Activated CD8-positive, alpha-beta T cell treated with anti-CD3 and anti-CD28 coated beads, Interleukin-2, amount 10 ng/mL, durations not matched to agents 7 days and 5 days (primary cell): ENCODE measurements at regions of chr6 and their contacts with region 1.

Region 1: GRCh38 chr6:151690768-151691562 is 116.5 kb upstream of the ESR1 start:
- DNase-seq: peak; percentile 49
- ATAC-seq: peak; percentile 91
- H3K4me3 Mint-ChIP-seq: peak overlapping the region; percentile 69
- H3K27ac Mint-ChIP-seq: peak overlapping the region; percentile 75
- H3K4me1 Mint-ChIP-seq: peaks cover 18% of the 10 kb centered on the region
- H3K27me3 Mint-ChIP-seq: peaks cover 4% of the 10 kb centered on the region

Region 2: DNA sequence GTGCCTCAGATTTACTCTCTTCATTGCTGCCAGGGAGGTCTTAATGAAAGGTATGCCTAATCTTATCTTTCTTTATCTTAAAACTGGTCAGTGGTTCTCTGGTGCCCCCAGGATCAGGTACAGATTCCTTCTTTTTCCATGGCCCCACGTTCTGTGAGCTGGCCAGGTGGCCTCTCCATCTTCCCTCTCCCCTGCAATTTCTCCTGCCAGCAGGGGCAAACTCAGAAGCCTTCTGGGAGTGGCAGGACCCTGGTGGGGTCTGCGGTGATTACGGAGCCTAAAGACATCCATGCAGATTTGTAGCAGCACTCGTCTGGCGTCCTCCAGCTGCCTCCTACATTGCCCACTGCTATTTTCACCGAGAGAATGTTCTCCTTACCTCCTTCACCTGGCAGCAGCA is 101.3 kb before region 1 on chr6:
- CTCF ChIA-PET with region 1: no interaction called
- POLR2A ChIA-PET with region 1: no interaction called
- DNase-seq: no peak
- ATAC-seq: no peak
- H3K4me3 Mint-ChIP-seq: no peak overlapping the region
- H3K27ac Mint-ChIP-seq: no peak overlapping the region
- H3K4me1 Mint-ChIP-seq: no peaks in the 10 kb centered on the region
- H3K27me3 Mint-ChIP-seq: no peaks in the 10 kb centered on the region

Region 3: DNA sequence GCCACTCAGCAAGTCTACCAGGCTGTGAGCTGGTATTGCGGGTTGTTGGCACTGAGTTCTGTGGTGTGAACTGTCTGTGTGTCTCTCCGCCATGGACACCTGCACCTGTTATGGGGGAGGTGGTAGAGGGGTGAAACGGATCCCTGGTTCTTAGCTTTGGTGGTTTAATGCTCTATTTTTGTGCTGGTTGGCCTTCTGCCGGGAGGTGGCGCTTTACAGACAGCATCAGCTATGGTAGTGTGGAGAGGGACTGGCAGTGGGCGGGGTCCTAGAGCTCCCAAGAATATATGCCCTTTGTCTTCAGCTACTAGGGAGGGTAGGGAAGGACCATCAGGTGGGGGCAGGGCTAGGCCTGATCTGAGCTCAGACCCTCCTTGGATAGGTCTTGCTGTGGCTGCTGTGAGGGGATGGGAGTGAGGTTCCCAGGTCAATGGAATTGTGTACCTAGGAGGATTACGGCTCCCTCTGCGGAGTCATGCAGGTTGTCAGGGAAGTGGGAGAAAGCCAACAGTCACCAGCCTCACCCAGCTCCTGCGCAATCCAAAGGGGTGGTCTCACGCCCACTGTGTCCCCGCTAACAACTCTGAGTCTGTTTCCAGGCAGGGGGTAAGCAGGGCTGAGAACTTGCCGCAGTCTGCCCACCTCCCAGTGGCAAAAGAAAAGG is 42.9 kb before region 1 on chr6:
- CTCF ChIA-PET with region 1: no interaction called
- POLR2A ChIA-PET with region 1: no interaction called
- DNase-seq: no peak
- ATAC-seq: no peak
- H3K4me3 Mint-ChIP-seq: no peak overlapping the region
- H3K27ac Mint-ChIP-seq: no peak overlapping the region
- H3K4me1 Mint-ChIP-seq: peaks cover 9% of the 10 kb centered on the region
- H3K27me3 Mint-ChIP-seq: peaks cover 14% of the 10 kb centered on the region

Region 4: DNA sequence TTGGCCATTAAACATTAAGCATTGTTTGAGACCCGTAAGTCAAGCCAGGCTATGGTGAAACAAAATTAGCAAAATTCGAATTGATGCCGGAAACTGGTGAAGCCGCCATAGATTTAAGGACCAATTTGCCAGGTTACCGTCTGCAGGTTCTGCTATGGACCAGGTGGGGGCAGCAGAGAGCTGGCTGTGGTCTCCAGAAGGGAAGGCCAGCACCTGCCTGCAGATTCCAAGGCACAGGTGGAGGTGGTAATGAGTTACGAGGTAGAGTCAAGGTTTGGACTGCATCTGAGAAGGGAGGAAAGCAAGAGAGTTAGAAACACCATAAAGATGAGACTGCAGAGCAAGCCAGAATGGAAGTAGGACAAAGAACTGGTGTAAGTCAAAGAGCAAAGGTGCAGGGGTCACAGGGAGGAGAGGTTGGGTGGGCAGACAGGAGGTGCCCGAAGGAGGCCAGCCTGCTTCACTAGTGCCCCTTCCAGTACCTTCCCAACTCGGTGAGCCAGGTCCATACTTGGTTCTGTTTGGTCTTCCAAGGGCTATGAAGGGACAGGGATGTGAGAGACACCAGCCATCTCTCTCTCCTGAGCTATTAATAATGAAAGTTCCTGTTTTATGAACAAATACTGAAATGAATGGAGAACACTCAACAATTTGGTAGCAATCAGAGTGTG is 15.1 kb before region 1 on chr6:
- CTCF ChIA-PET with region 1: interaction called, 15 read pairs
- POLR2A ChIA-PET with region 1: interaction called, 5 read pairs
- DNase-seq: peak; percentile 62
- ATAC-seq: peak; percentile 82
- H3K4me3 Mint-ChIP-seq: no peak overlapping the region
- H3K27ac Mint-ChIP-seq: no peak overlapping the region
- H3K4me1 Mint-ChIP-seq: peaks cover 3% of the 10 kb centered on the region
- H3K27me3 Mint-ChIP-seq: peaks cover 3% of the 10 kb centered on the region

Region 5: DNA sequence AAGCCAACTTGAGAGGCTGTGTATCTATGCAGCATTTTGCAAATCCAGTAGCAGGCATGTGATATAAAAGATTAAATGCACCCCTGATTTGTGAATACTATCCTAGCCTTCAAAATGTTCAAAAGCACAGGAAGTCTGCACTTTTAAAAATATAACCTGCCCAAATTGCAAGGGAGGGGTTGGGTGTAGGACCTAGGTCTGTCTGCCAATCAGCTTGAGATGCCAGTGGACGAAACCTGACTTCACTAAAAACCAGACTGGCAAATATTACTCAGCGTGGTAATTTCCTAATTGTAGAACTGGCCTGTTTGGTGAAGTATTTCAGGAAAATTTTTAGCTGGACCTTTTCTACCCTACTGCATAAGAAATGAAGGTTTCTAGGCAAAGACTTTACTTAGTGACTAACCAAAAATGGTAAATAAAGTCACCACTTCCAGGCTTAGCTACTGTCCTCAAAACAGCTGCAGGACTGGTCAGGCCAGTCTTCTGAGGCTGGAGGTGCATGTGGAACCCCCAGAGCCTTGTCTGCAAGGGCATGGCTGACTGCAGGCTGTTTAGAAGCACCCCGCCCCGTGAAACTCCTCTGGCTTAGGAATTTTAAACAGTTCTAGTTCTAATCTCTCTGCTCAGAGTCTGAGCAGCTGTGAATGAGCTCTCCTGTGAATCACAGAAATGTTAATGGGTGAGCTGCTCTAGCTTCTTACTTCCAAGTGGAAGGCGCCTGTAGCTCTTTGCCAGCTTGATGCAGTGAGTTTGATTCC is 12.1 kb after region 1 on chr6:
- CTCF ChIA-PET with region 1: interaction called, 10 read pairs
- POLR2A ChIA-PET with region 1: no interaction called
- DNase-seq: no peak
- ATAC-seq: no peak
- H3K4me3 Mint-ChIP-seq: no peak overlapping the region
- H3K27ac Mint-ChIP-seq: no peak overlapping the region
- H3K4me1 Mint-ChIP-seq: peaks cover 10% of the 10 kb centered on the region
- H3K27me3 Mint-ChIP-seq: peaks cover 1% of the 10 kb centered on the region

Region 6: GRCh38 chr6:152124429-152125074 is 433.6 kb after region 1 on chr6:
- CTCF ChIA-PET with region 1: interaction called, 21 read pairs
- POLR2A ChIA-PET with region 1: no interaction called
- DNase-seq: no peak
- ATAC-seq: no peak
- H3K4me3 Mint-ChIP-seq: no peak overlapping the region
- H3K27ac Mint-ChIP-seq: no peak overlapping the region
- H3K4me1 Mint-ChIP-seq: no peaks in the 10 kb centered on the region
- H3K27me3 Mint-ChIP-seq: no peaks in the 10 kb centered on the region